ENCODE measurements at regions of chr9 and their contacts with region 1.

Region 1: GRCh38 chr9:130426883-130427282 is 17.9 kb upstream of the ASS1 start:
- DNase-seq: no peak

Region 2: DNA sequence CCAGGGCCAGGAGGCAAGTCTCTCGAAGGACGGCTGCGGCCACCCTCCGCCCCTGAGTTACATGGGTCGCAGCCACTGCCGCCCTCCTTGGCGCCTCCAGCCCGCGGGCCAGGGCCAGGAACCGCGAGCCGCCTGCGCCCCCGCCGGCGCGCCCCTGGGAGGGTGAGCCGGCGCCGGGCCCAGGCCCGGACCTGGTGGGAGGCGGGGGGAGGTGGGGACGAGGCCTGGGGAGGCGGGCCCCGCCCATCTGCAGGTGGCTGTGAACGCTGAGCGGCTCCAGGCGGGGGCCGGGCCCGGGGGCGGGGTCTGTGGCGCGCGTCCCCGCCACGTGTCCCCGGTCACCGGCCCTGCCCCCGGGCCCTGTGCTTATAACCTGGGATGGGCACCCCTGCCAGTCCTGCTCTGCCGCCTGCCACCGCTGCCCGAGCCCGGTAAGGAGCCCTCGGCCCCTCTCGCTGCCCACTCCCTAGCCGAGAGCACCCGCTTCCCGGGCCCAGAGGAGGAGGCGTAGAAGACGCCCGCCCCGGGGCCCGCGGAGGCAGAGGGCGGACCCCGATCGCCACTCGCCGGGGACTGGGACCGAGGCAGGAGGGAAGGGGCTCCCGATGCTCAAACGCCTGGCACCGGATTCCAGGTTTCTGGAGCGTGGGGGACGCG is 17.8 kb after region 1 on chr9 and contains the start of gene ASS1:
- intact Hi-C with region 1: loop called (anchors 2 kb)
- DNase-seq: peak; percentile 86
- total RNA-seq, gene ASS1: 53.7 TPM

Region 3: GRCh38 chr9:130866474-130866965 is 439.6 kb after region 1 on chr9:
- intact Hi-C with region 1: no loop called
- DNase-seq: no peak

Measured in cardiac septum (tissue), 1 donor.